Astrocyte of the cerebellum (primary cell): ENCODE measurements at regions of chr17 and their contacts with region 1.

Region 1: GRCh38 chr17:79589669-79590522 is 21.0 kb downstream of the RBFOX3 start:
- DNase-seq: no peak
- H3K4me3 ChIP-seq: no peak overlapping the region
- CTCF ChIP-seq: no peak

Region 2: DNA sequence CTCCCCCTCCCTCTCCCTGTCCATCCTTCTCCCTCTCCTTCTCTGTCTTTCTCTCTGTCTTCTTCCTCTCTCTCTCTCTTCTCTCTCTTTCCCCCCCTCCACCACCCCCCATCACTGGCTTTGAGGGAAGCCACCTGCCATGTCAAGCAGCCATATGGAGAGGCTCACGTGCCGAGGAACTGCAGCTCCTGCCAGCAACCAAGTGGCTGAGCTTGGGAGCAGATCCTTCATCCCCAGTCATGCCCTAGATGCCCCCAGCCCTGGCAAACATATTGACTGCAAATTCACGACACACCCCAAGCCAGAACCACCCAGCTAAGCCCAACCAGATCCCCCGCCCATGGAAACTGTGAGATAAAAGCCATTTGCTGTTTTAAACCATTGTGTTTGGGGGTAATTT is 61.9 kb after region 1 on chr17:
- in situ Hi-C with region 1: loop called (anchors 5 kb)
- DNase-seq: no peak
- H3K4me3 ChIP-seq: no peak overlapping the region
- CTCF ChIP-seq: no peak